Panc1 (cell line): ENCODE measurements at regions of chr13 and their contacts with region 1.

Region 1: GRCh38 chr13:76473552-76474134 is 412.6 kb downstream of the KCTD12 start:
- DNase-seq: peak; percentile 38
- ATAC-seq: peak; percentile 91
- H3K4me3 ChIP-seq: no peak overlapping the region
- H3K27ac ChIP-seq: no peak overlapping the region
- H3K4me1 ChIP-seq: no peaks in the 10 kb centered on the region
- H3K27me3 ChIP-seq: no peaks in the 10 kb centered on the region; the same call in 1 of the 2 replicates
- CTCF ChIP-seq: peak; percentile 66

Region 2: GRCh38 chr13:75876360-75877050 is 597.1 kb before region 1 on chr13:
- CTCF ChIA-PET with region 1: no interaction called
- POLR2A ChIA-PET with region 1: no interaction called
- in situ Hi-C with region 1: no loop called
- intact Hi-C with region 1: loop called (anchors 2 kb)
- DNase-seq: peak; percentile 45
- ATAC-seq: peak; percentile 94
- H3K4me3 ChIP-seq: no peak overlapping the region
- H3K27ac ChIP-seq: no peak overlapping the region
- H3K4me1 ChIP-seq: peaks cover 5% of the 10 kb centered on the region; the same call in 1 of the 2 replicates
- H3K27me3 ChIP-seq: no peaks in the 10 kb centered on the region
- CTCF ChIP-seq: peak; percentile 84

Region 3: DNA sequence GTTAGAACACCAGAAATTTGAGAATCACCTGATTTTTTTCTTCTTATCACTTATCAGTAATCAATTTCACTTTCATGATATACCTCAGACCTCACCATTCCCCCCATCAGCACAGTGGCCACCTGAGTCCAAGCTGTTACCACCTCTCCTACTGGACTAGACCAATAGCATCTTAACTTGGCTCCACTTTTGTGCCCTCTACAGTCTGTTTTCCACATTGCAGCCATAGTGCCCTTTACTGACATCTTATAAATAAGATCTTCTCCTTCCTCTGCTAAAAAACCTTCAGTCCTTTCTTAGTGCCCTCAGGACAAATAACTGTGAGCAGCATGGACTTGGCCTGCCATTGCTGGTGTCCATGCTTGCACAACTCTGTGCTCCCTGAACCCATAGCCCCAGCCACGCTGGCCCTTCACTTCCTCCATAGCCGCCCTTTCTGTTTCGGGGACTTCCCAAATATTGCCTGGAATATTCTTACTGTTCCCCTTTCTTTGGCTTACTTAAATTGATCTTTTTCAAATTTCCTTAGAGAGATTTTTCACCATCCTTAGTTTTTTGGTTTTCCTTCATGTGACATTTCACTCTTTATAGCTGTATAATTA is 456.7 kb before region 1 on chr13:
- CTCF ChIA-PET with region 1: no interaction called
- POLR2A ChIA-PET with region 1: no interaction called
- in situ Hi-C with region 1: no loop called
- intact Hi-C with region 1: loop called (anchors 2 kb)
- DNase-seq: no peak
- ATAC-seq: no peak
- H3K4me3 ChIP-seq: no peak overlapping the region
- H3K27ac ChIP-seq: no peak overlapping the region
- H3K4me1 ChIP-seq: no peaks in the 10 kb centered on the region
- H3K27me3 ChIP-seq: no peaks in the 10 kb centered on the region
- CTCF ChIP-seq: peak; percentile 50

Region 4: DNA sequence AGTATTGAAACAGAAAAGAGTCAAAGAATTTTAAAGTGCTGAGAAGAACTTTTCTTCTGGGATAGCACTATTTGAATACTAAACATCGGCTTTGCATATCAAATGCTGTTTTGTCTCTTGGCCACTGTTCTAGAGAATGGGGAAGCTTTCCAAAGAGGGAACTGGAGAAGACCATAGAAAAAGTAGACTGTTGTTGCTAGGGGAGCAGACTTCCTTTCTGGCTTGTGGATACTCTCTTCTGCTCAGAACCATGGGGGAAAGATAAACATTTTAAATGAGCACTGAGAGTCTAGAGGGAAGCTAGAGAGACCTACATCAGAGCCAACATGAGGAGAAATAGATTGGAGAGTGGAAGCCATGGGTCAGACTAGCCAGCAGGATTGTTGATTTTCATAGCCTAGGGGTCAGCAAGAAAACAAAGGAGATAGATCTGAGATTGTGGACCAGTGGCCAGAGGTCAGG is 96.9 kb after region 1 on chr13:
- CTCF ChIA-PET with region 1: no interaction called
- POLR2A ChIA-PET with region 1: no interaction called
- in situ Hi-C with region 1: no loop called
- intact Hi-C with region 1: no loop called
- DNase-seq: no peak
- ATAC-seq: no peak
- H3K4me3 ChIP-seq: no peak overlapping the region
- H3K27ac ChIP-seq: no peak overlapping the region
- H3K4me1 ChIP-seq: no peaks in the 10 kb centered on the region
- H3K27me3 ChIP-seq: no peaks in the 10 kb centered on the region
- CTCF ChIP-seq: no peak

Region 5: GRCh38 chr13:76903544-76904162 is 430.0 kb after region 1 on chr13:
- CTCF ChIA-PET with region 1: no interaction called
- POLR2A ChIA-PET with region 1: no interaction called
- in situ Hi-C with region 1: no loop called
- intact Hi-C with region 1: loop called (anchors 2 kb)
- DNase-seq: peak; percentile 67
- ATAC-seq: no peak
- H3K4me3 ChIP-seq: no peak overlapping the region
- H3K27ac ChIP-seq: no peak overlapping the region
- H3K4me1 ChIP-seq: no peaks in the 10 kb centered on the region
- H3K27me3 ChIP-seq: no peaks in the 10 kb centered on the region
- CTCF ChIP-seq: peak; percentile 87